ENCODE measurements at regions of chr3 and their contacts with region 1.

Region 1: DNA sequence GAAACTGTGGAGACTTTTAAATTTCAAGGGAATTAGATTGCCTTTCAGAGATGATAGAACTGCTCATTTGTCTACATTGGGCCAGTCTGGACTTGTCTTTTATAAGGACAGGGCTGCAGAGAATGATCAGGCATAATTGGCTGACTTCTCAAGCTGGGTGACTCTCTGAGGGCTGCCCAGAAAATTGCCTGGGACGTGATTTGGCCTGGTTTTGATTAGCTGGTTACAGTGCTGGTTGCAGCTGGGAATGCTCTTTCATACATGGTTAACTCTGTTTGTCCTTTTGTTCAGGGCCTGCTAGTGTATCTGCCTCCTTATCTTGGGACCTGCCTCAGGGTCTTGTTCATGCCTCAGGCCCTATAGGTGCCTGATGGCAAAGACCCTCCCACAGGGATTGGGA is 245.6 kb downstream of the CLSTN2 start:
- DNase-seq: no peak
- ATAC-seq: no peak
- H3K4me3 ChIP-seq: no peak overlapping the region
- H3K27ac ChIP-seq: no peak overlapping the region
- H3K4me1 ChIP-seq: peaks cover 2% of the 10 kb centered on the region
- H3K27me3 ChIP-seq: no peaks in the 10 kb centered on the region
- CTCF ChIP-seq: no peak
- POLR2A ChIP-seq: no peak

Region 2: GRCh38 chr3:140166861-140167599 is 13.6 kb before region 1 on chr3:
- intact Hi-C with region 1: loop called (anchors 2 kb)
- DNase-seq: no peak
- ATAC-seq: no peak
- H3K4me3 ChIP-seq: no peak overlapping the region
- H3K27ac ChIP-seq: no peak overlapping the region
- H3K4me1 ChIP-seq: no peaks in the 10 kb centered on the region
- H3K27me3 ChIP-seq: no peaks in the 10 kb centered on the region
- CTCF ChIP-seq: no peak
- POLR2A ChIP-seq: no peak

Measured in body of pancreas (tissue), 4 donors.